Natural killer cell (primary cell): ENCODE measurements at regions of chr3 and their contacts with region 1.

Region 1: DNA sequence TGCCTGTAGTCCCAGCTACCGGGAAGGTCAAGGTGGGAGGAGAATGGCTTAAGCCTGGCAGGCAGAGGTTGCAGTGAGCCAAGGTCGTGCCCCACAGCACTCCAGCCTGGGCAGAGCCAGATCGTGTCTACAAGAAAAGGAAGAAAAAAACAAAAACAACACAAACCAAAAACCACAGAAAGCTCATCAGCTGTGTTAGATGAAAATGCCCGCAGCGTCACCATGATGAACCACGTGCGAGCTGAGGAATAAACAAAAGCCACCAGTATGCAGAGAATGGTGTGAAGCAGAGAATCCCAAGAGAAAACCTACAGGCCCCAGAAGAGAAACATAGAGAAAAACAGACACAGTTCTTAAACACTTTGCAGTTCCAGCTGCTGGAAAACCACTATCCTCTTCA is 19.7 kb upstream of the TM4SF19 start:
- DNase-seq: peak; percentile 55 to 57
- ATAC-seq: peak; percentile 80 to 88 (median 81)
- H3K4me3 ChIP-seq: no peak overlapping the region
- H3K4me3 Mint-ChIP-seq: peak overlapping the region; percentile 73
- H3K27ac ChIP-seq: peak overlapping the region; percentile 13
- H3K27ac Mint-ChIP-seq: peak overlapping the region; percentile 74 to 82
- H3K4me1 ChIP-seq: peaks cover 15% of the 10 kb centered on the region
- H3K4me1 Mint-ChIP-seq: peaks cover 19 to 44% of the 10 kb centered on the region in 2 donors
- H3K27me3 ChIP-seq: no peaks in the 10 kb centered on the region
- H3K27me3 Mint-ChIP-seq: no peaks in the 10 kb centered on the region
- CTCF ChIP-seq: no peak

Region 2: DNA sequence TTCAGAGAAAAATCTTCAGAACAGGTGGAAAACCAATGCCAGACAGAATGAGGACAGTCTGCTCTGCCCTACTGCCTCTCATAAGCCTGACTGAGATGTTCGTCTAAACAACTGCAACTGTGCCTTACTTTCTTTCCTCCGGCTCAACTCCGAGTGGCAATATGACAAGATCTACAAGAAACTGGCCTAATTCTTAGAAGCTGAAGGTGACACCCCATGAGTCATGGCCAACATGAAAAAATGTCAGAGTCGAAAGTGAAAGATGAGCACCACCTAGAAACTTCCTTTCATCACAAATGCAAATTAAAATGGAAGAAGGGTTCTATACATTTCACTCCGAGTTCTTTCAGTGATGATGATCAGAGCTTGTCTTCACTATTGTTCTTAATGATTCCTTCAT is 83.3 kb before region 1 on chr3:
- intact Hi-C with region 1: no loop called
- DNase-seq: peak; percentile 43 to 85
- ATAC-seq: peak; percentile 92 to 98 (median 93)
- H3K4me3 ChIP-seq: peak overlapping the region; percentile 18
- H3K4me3 Mint-ChIP-seq: peak overlapping the region; percentile 91
- H3K27ac ChIP-seq: peak overlapping the region; percentile 94
- H3K27ac Mint-ChIP-seq: peak overlapping the region; percentile 94 to 96
- H3K4me1 ChIP-seq: peaks cover 23% of the 10 kb centered on the region
- H3K4me1 Mint-ChIP-seq: peaks cover 41 to 50% of the 10 kb centered on the region in 2 donors
- H3K27me3 ChIP-seq: no peaks in the 10 kb centered on the region
- H3K27me3 Mint-ChIP-seq: no peaks in the 10 kb centered on the region
- CTCF ChIP-seq: no peak

Region 3: GRCh38 chr3:196317687-196318467 is 40.0 kb before region 1 on chr3 and contains the start of gene DYNLT2B:
- intact Hi-C with region 1: loop called (anchors 5 kb)
- DNase-seq: peak; percentile 87 to 95
- ATAC-seq: peak; percentile 90 to 96 (median 90)
- H3K4me3 ChIP-seq: peak within 1 kb of the TSS; percentile 86
- H3K4me3 Mint-ChIP-seq: peak within 1 kb of the TSS; percentile 95
- H3K27ac ChIP-seq: peak within 1 kb of the TSS; percentile 93
- H3K27ac Mint-ChIP-seq: peak within 1 kb of the TSS; percentile 72 to 96
- H3K4me1 ChIP-seq: peaks cover 13% of the 10 kb centered on the region
- H3K4me1 Mint-ChIP-seq: peaks cover 0 to 25% of the 10 kb centered on the region in 2 donors
- H3K27me3 ChIP-seq: no peaks in the 10 kb centered on the region
- H3K27me3 Mint-ChIP-seq: no peaks in the 10 kb centered on the region
- CTCF ChIP-seq: no peak
- total RNA-seq, gene DYNLT2B: 3.6 to 7.3 (median 5.4) TPM

Region 4: DNA sequence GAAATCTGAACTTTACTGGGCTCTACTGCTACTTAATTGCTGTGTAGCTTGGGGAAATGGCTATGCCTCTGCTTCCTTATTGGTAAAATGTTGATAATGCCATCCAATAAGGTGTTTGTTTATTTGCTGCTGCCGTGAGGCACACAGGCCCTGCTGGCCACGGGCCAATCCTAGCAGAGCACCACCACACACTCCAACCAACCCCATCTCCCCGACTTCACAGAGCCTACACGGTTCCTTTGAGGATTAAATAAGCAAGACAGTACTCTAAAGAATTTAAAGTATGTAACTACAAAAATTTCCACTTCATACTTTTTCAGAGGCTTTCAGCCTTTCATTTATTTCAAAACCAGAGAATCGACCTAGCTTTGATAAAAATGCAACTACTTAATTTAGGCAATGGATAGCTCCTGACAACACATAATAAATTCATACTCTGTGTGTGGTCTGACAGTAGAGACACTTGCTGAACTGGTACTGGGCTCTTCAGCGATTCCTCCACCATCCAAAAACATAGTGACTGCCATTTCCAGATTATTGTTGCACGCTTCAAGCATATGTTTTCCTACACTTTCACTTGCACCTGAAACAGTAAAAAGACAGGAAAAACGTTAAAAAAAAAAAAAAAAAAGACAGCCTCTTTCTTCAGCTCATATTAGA is 49.0 kb after region 1 on chr3:
- intact Hi-C with region 1: no loop called
- DNase-seq: no peak
- ATAC-seq: no peak
- H3K4me3 ChIP-seq: no peak overlapping the region
- H3K4me3 Mint-ChIP-seq: no peak overlapping the region
- H3K27ac ChIP-seq: no peak overlapping the region
- H3K27ac Mint-ChIP-seq: no peak overlapping the region
- H3K4me1 ChIP-seq: peaks cover 6% of the 10 kb centered on the region
- H3K4me1 Mint-ChIP-seq: peaks cover 23 to 31% of the 10 kb centered on the region in 2 donors
- H3K27me3 ChIP-seq: no peaks in the 10 kb centered on the region
- H3K27me3 Mint-ChIP-seq: no peaks in the 10 kb centered on the region
- CTCF ChIP-seq: no peak